Activated CD4-positive, alpha-beta memory T cell treated with anti-CD3 and anti-CD28 coated beads, Interleukin-2, amount 10 ng/mL, durations not matched to agents 7 days and 5 days (primary cell): ENCODE measurements at regions of chr19 and their contacts with region 1.

Region 1: GRCh38 chr19:41641879-41642485 is 15.1 kb upstream of the CEACAM4 start:
- DNase-seq: peak; percentile 67
- H3K4me3 Mint-ChIP-seq: no peak overlapping the region
- H3K27ac Mint-ChIP-seq: no peak overlapping the region
- H3K4me1 Mint-ChIP-seq: peaks cover 2% of the 10 kb centered on the region
- H3K27me3 Mint-ChIP-seq: peaks cover 18% of the 10 kb centered on the region

Region 2: GRCh38 chr19:41588497-41589209 is 53.3 kb before region 1 on chr19:
- CTCF ChIA-PET with region 1: no interaction called
- POLR2A ChIA-PET with region 1: no interaction called
- DNase-seq: peak; percentile 38
- H3K4me3 Mint-ChIP-seq: no peak overlapping the region
- H3K27ac Mint-ChIP-seq: no peak overlapping the region
- H3K4me1 Mint-ChIP-seq: no peaks in the 10 kb centered on the region
- H3K27me3 Mint-ChIP-seq: peaks cover 14% of the 10 kb centered on the region

Region 3: GRCh38 chr19:41619018-41619556 is 22.9 kb before region 1 on chr19:
- CTCF ChIA-PET with region 1: no interaction called
- POLR2A ChIA-PET with region 1: no interaction called
- DNase-seq: no peak
- H3K4me3 Mint-ChIP-seq: no peak overlapping the region
- H3K27ac Mint-ChIP-seq: no peak overlapping the region
- H3K4me1 Mint-ChIP-seq: no peaks in the 10 kb centered on the region
- H3K27me3 Mint-ChIP-seq: no peaks in the 10 kb centered on the region

Region 4: GRCh38 chr19:41652250-41652649 is 10.3 kb after region 1 on chr19:
- CTCF ChIA-PET with region 1: interaction called, 13 read pairs
- POLR2A ChIA-PET with region 1: no interaction called
- DNase-seq: no peak
- H3K4me3 Mint-ChIP-seq: no peak overlapping the region
- H3K27ac Mint-ChIP-seq: no peak overlapping the region
- H3K4me1 Mint-ChIP-seq: peaks cover 3% of the 10 kb centered on the region
- H3K27me3 Mint-ChIP-seq: peaks cover 25% of the 10 kb centered on the region

Region 5: GRCh38 chr19:41691268-41691970 is 49.4 kb after region 1 on chr19:
- CTCF ChIA-PET with region 1: interaction called, 21 read pairs
- POLR2A ChIA-PET with region 1: no interaction called
- DNase-seq: peak; percentile 31
- H3K4me3 Mint-ChIP-seq: no peak overlapping the region
- H3K27ac Mint-ChIP-seq: no peak overlapping the region
- H3K4me1 Mint-ChIP-seq: no peaks in the 10 kb centered on the region
- H3K27me3 Mint-ChIP-seq: peaks cover 21% of the 10 kb centered on the region

Region 6: DNA sequence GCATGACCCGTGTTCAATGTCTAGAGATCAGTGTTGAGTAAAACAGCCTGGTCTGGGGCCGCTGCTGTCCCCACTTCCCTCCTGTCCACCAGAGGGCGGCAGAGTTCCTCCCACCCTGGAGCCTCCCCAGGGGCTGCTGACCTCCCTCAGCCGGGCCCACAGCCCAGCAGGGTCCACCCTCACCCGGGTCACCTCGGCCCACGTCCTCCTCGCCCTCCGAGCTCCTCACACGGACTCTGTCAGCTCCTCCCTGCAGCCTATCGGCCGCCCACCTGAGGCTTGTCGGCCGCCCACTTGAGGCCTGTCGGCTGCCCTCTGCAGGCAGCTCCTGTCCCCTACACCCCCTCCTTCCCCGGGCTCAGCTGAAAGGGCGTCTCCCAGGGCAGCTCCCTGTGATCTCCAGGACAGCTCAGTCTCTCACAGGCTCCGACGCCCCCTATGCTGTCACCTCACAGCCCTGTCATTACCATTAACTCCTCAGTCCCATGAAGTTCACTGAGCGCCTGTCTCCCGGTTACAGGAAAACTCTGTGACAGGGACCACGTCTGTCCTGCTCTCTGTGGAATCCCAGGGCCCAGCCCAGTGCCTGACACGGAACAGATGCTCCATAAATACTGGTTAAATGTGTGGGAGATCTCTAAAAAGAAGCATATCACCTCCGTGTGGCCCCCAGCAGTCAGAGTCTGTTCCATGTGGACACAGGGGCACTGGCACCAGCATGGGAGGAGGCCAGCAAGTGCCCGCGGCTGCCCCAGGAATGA is 64.9 kb after region 1 on chr19:
- CTCF ChIA-PET with region 1: interaction called, 15 read pairs
- POLR2A ChIA-PET with region 1: no interaction called
- DNase-seq: peak; percentile 69
- H3K4me3 Mint-ChIP-seq: peak overlapping the region; percentile 62
- H3K27ac Mint-ChIP-seq: no peak overlapping the region
- H3K4me1 Mint-ChIP-seq: peaks cover 4% of the 10 kb centered on the region
- H3K27me3 Mint-ChIP-seq: peaks cover 14% of the 10 kb centered on the region